ENCODE measurements at regions of chr20 and their contacts with region 1.

Region 1: DNA sequence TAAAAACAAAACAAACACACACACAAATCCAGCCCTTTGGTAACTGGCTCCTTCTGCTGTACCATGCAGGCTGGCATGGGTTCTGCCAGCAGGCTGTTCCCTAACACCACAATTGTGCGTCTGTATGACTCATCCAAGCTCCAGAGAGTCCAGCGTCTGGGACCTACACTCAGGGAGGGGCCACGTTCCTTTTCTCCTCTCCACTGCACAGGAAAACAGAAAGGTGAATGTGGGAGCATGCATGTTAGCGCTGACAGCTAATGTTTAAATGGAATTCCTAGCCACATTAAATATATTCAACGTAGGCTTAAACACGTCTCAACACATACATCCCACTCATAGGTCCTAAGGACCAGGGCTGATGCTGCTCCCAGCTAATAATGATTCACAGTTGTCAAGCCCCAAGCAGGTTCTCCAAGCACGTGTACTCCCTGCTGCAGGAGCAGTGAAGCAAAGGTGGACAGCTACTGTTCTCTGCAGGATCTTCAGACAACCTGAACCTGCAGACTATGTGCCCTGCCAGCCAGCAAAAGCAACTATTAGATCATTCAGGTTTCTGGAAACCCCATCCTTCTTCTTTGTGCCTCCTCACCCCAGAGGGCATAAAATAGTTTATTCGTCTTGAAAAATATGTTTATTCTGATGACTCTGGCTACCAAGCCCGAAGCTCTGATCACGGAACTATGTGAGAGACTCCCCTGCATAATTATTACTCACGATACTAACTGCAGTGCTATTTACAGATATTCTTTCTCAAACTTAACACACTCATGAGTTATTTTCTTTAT is 20.9 kb downstream of the MAP1LC3A start:
- DNase-seq: peak; percentile 65 to 89 (median 76)
- H3K4me3 ChIP-seq: no peak overlapping the region
- H3K27ac ChIP-seq: peak overlapping the region in 1 of 5 donors; percentile 3
- H3K4me1 ChIP-seq: no peaks in the 10 kb centered on the region
- H3K27me3 ChIP-seq: no peaks in the 10 kb centered on the region
- CTCF ChIP-seq: peak; percentile 22 to 78 (median 70)
- POLR2A ChIP-seq: no peak

Region 2: GRCh38 chr20:33971147-33971975 is 608.0 kb before region 1 on chr20:
- intact Hi-C with region 1: no loop called
- DNase-seq: no peak
- H3K4me3 ChIP-seq: no peak overlapping the region
- H3K27ac ChIP-seq: no peak overlapping the region
- H3K4me1 ChIP-seq: no peaks in the 10 kb centered on the region
- H3K27me3 ChIP-seq: no peaks in the 10 kb centered on the region
- CTCF ChIP-seq: no peak
- POLR2A ChIP-seq: no peak

Region 3: GRCh38 chr20:34704177-34705007 is 125.0 kb after region 1 on chr20 and contains the start of gene TP53INP2:
- intact Hi-C with region 1: loop called (anchors 10 kb)
- DNase-seq: peak; percentile 95 to 99 (median 97)
- H3K4me3 ChIP-seq: peak within 1 kb of the TSS; percentile 43 to 94 (median 70)
- H3K27ac ChIP-seq: peak within 1 kb of the TSS; percentile 98 to 100 (median 100)
- H3K4me1 ChIP-seq: peaks cover 23 to 36% of the 10 kb centered on the region in 2 donors
- H3K27me3 ChIP-seq: no peaks in the 10 kb centered on the region
- CTCF ChIP-seq: no peak
- POLR2A ChIP-seq: peak; percentile 93 to 97
- total RNA-seq, gene TP53INP2: 9.4 to 74.5 (median 18.7) TPM

Region 4: DNA sequence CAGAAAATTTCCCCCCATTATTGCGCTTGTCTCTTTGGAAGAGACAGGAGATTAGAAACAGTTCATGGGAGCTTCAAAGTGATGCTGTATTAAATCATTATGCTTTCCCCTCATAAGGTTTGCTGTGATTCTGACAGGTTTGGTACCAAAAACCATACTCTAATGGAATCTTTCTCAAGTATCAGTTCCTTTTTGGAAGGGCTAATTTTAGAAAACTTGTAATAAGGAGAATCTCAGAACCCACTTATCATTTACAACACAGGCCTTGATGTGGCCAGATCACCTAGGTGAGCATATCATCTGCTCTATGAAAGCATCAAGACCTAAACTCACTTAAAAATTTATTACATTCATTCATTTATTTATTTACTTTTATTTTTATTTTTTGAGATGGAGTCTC is 176.0 kb after region 1 on chr20:
- intact Hi-C with region 1: loop called in 1 of 2 experiments (anchors 5 kb)
- DNase-seq: no peak
- H3K4me3 ChIP-seq: no peak overlapping the region
- H3K27ac ChIP-seq: no peak overlapping the region
- H3K4me1 ChIP-seq: no peaks in the 10 kb centered on the region
- H3K27me3 ChIP-seq: no peaks in the 10 kb centered on the region
- CTCF ChIP-seq: no peak
- POLR2A ChIP-seq: no peak

Region 5: GRCh38 chr20:34768096-34768495 is 188.7 kb after region 1 on chr20:
- intact Hi-C with region 1: loop called in 1 of 2 experiments (anchors 5 kb)
- DNase-seq: no peak
- H3K4me3 ChIP-seq: no peak overlapping the region
- H3K27ac ChIP-seq: no peak overlapping the region
- H3K4me1 ChIP-seq: peaks cover 11 to 14% of the 10 kb centered on the region in 2 donors
- H3K27me3 ChIP-seq: no peaks in the 10 kb centered on the region
- CTCF ChIP-seq: no peak
- POLR2A ChIP-seq: no peak

Measured in adrenal gland (tissue), 19 donors.